ENCODE measurements at regions of chr15 and their contacts with region 1.

Region 1: DNA sequence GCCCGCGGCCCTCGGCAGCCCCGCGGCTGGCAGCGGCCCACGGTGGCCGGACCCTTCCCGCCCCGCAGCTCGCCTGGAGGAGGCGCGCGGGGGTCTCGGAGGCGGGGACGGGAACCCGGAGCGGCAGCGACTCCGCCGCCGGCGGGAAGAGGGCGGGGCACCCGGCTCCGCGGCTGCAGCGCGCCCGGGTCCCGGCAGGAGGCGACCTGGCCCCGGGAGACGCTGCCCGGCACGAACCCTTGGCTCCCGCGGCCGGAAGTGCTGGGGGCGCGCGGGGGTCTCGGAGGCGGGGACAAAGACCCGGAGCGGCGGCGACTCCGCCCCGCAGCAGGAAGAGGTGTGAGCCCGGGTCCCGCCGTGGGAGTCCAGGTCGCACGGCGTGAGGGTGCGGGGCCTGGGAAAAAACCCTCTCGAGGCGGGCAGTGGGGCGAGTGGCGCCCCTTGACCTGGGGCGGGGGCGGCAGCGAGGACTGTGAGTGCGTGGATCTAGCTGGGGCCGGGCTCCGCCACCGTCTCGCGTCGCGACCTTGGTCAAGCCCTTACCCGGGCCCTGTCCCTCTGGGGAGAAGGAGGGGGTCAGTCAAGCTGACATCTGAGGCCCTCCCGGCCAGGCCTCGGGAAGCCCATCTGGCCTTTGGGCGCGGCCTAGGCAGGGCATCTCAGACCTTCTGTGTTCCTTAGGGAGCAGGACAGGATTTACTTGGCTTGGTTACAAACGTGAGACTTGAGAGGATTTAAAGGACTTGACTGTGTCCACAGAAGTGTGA is at the start of gene CIB2:
- DNase-seq: peak; percentile 68 to 85 (median 78)
- H3K4me3 ChIP-seq: peak within 1 kb of the TSS; percentile 73
- H3K4me3 Mint-ChIP-seq: peak within 1 kb of the TSS; percentile 80 to 90 (median 82)
- H3K27ac ChIP-seq: peak within 1 kb of the TSS; percentile 68
- H3K27ac Mint-ChIP-seq: peak within 1 kb of the TSS; percentile 56 to 95 (median 88)
- H3K4me1 ChIP-seq: peaks cover 12% of the 10 kb centered on the region
- H3K4me1 Mint-ChIP-seq: peaks cover 17 to 25% (median 21%) of the 10 kb centered on the region in 3 donors
- H3K27me3 ChIP-seq: no peaks in the 10 kb centered on the region
- H3K27me3 Mint-ChIP-seq: no peaks in the 10 kb centered on the region
- total RNA-seq, gene CIB2: 2.1 to 2.3 TPM

Region 2: DNA sequence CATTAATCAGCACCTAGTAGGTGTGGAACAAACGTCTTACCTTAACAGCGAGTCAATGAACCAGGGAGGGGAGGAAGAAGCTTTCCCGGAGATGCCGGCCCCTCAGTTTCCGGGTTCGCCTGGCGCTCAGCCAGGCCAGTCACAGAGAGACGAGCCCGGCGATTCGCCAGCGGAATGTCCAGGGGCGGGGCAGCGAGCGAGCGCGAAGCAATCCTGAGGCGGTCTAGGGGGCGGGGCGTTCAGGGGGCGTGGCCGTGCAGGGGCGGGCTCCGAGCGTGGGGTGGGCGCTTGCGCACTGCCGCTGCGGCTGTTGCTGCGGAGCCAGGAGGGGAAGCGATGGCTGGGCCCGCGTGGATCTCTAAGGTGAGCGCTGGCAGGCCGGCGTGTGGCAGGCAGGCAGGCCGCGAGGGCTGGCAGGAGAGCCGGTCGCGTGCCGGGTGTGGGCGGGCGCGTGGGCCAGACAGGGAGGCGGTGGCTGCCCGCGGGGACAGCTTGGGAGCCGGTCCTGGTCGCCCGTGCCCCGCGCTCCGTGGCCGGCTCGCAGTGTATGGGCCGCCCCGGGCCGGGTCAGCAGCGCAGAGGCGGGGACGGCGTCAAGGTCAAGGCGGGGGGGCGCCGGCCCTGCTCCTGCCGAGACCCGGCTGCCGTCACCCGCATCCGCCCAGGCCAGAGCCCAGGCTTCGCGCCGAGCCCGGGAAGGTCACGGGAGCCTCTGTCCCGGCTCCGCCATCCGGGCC is 17.8 kb after region 1 on chr15 and contains the start of gene IDH3A:
- CTCF ChIA-PET with region 1: interaction called, 17 read pairs
- POLR2A ChIA-PET with region 1: interaction called, 6 read pairs
- DNase-seq: peak; percentile 98 to 100 (median 99)
- H3K4me3 ChIP-seq: peak within 1 kb of the TSS; percentile 74
- H3K4me3 Mint-ChIP-seq: peak within 1 kb of the TSS; percentile 88 to 98 (median 95)
- H3K27ac ChIP-seq: peak within 1 kb of the TSS; percentile 68
- H3K27ac Mint-ChIP-seq: peak within 1 kb of the TSS; percentile 75 to 99 (median 90)
- H3K4me1 ChIP-seq: peaks cover 30% of the 10 kb centered on the region
- H3K4me1 Mint-ChIP-seq: peaks cover 35 to 49% (median 44%) of the 10 kb centered on the region in 3 donors
- H3K27me3 ChIP-seq: no peaks in the 10 kb centered on the region
- H3K27me3 Mint-ChIP-seq: peaks cover 0 to 3% of the 10 kb centered on the region in 2 donors
- total RNA-seq, gene IDH3A: 134 to 151 TPM

Region 3: GRCh38 chr15:78156653-78157052 is 25.2 kb after region 1 on chr15:
- CTCF ChIA-PET with region 1: interaction called, 11 read pairs
- POLR2A ChIA-PET with region 1: no interaction called
- DNase-seq: no peak
- H3K4me3 ChIP-seq: no peak overlapping the region
- H3K4me3 Mint-ChIP-seq: no peak overlapping the region
- H3K27ac ChIP-seq: no peak overlapping the region
- H3K27ac Mint-ChIP-seq: no peak overlapping the region
- H3K4me1 ChIP-seq: peaks cover 8% of the 10 kb centered on the region
- H3K4me1 Mint-ChIP-seq: peaks cover 11 to 19% (median 11%) of the 10 kb centered on the region in 3 donors
- H3K27me3 ChIP-seq: no peaks in the 10 kb centered on the region
- H3K27me3 Mint-ChIP-seq: no peaks in the 10 kb centered on the region

Region 4: GRCh38 chr15:78415286-78415685 is 283.8 kb after region 1 on chr15:
- CTCF ChIA-PET with region 1: no interaction called
- POLR2A ChIA-PET with region 1: no interaction called
- DNase-seq: no peak
- H3K4me3 ChIP-seq: no peak overlapping the region
- H3K4me3 Mint-ChIP-seq: no peak overlapping the region
- H3K27ac ChIP-seq: no peak overlapping the region
- H3K27ac Mint-ChIP-seq: no peak overlapping the region
- H3K4me1 ChIP-seq: no peaks in the 10 kb centered on the region
- H3K4me1 Mint-ChIP-seq: no peaks in the 10 kb centered on the region
- H3K27me3 ChIP-seq: peaks cover 3% of the 10 kb centered on the region
- H3K27me3 Mint-ChIP-seq: peaks cover 2 to 12% of the 10 kb centered on the region in 2 donors